Activated CD4-positive, alpha-beta T cell treated with anti-CD3 and anti-CD28 coated beads for 36 hours (primary cell): ENCODE measurements at regions of chr1 and their contacts with region 1.

Region 1: GRCh38 chr1:116794804-116795481 is 40.7 kb downstream of the CD2 start:
- DNase-seq: no peak
- ATAC-seq: no peak
- H3K4me3 Mint-ChIP-seq: no peak overlapping the region
- H3K27ac Mint-ChIP-seq: peak overlapping the region; percentile 4
- H3K4me1 Mint-ChIP-seq: peaks cover 51% of the 10 kb centered on the region
- H3K27me3 Mint-ChIP-seq: no peaks in the 10 kb centered on the region

Region 2: GRCh38 chr1:116489231-116489697 is 305.7 kb before region 1 on chr1:
- CTCF ChIA-PET with region 1: no interaction called
- POLR2A ChIA-PET with region 1: no interaction called
- intact Hi-C with region 1: no loop called
- DNase-seq: no peak
- ATAC-seq: no peak
- H3K4me3 Mint-ChIP-seq: no peak overlapping the region
- H3K27ac Mint-ChIP-seq: no peak overlapping the region
- H3K4me1 Mint-ChIP-seq: peaks cover 5% of the 10 kb centered on the region
- H3K27me3 Mint-ChIP-seq: no peaks in the 10 kb centered on the region

Region 3: GRCh38 chr1:116777831-116778830 is 16.8 kb before region 1 on chr1:
- CTCF ChIA-PET with region 1: interaction called, 5 read pairs
- POLR2A ChIA-PET with region 1: interaction called, 3 read pairs
- intact Hi-C with region 1: loop called in 1 of 2 experiments (anchors 2 kb)
- DNase-seq: no peak
- ATAC-seq: peak; percentile 61
- H3K4me3 Mint-ChIP-seq: peak overlapping the region; percentile 47
- H3K27ac Mint-ChIP-seq: peak overlapping the region; percentile 95
- H3K4me1 Mint-ChIP-seq: peaks cover 42% of the 10 kb centered on the region
- H3K27me3 Mint-ChIP-seq: no peaks in the 10 kb centered on the region

Region 4: DNA sequence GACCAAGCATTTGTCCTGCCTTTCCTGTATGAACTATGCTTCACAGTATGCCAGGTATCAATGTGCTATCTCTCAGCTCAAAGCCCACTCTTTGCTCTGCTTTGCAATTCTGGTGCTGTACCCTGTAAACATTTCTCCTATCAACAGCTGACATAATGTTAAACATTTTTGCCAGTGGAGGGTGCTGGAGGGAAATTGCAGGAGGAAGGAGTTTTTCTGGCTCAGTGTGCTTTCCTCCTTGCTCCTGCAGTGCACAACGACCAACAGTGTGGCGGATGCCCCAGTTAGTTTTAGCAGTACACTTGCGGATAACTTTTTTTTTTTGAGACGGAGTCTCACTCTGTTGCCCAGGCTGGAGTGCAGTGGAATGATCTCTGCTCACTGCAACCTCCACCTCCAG is 47.7 kb after region 1 on chr1:
- CTCF ChIA-PET with region 1: no interaction called
- POLR2A ChIA-PET with region 1: no interaction called
- intact Hi-C with region 1: no loop called
- DNase-seq: no peak
- ATAC-seq: no peak
- H3K4me3 Mint-ChIP-seq: no peak overlapping the region
- H3K27ac Mint-ChIP-seq: no peak overlapping the region
- H3K4me1 Mint-ChIP-seq: peaks cover 12% of the 10 kb centered on the region
- H3K27me3 Mint-ChIP-seq: no peaks in the 10 kb centered on the region